Naive thymus-derived CD4-positive, alpha-beta T cell (primary cell): ENCODE measurements at regions of chr4 and their contacts with region 1.

Region 1: DNA sequence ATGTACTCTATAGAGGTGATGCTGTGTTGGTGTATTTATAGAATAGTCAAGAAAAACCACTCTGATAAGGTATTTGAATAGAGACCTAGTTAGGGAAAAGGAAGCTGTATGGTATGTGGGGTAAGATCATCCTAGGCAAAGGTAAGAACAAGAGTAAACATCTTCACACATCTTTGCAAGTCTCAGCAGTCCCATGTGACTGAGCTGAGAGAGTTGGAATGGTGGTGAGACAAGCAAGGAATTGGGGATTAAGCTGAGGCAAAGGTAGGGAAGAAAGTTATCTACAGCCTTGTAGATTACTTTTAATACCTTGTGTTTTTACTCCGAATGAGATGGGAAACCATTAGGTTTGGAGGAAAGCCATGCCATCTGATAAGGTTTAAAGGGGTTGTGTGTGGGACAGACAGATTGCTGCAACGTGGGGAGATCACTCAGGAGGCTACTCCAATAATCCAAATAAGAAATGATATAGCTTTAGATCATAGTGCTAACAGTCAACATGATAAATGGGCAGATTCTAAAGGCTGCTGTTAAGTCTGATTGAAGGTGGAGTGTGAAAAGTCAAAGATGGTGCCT is 31.7 kb upstream of the MANBA start:
- DNase-seq: no peak
- ATAC-seq: peak; percentile 41
- H3K4me3 ChIP-seq: no peak overlapping the region
- H3K4me3 Mint-ChIP-seq: no peak overlapping the region
- H3K27ac ChIP-seq: no peak overlapping the region
- H3K27ac Mint-ChIP-seq: peak overlapping the region in 6 of 9 donors; percentile 6 to 48 (median 28)
- H3K4me1 ChIP-seq: no peaks in the 10 kb centered on the region
- H3K4me1 Mint-ChIP-seq: peaks cover 8 to 27% (median 19%) of the 10 kb centered on the region in 7 donors
- H3K27me3 ChIP-seq: no peaks in the 10 kb centered on the region
- H3K27me3 Mint-ChIP-seq: no peaks in the 10 kb centered on the region

Region 2: GRCh38 chr4:102751941-102752340 is 40.5 kb before region 1 on chr4:
- CTCF ChIA-PET with region 1: no interaction called
- POLR2A ChIA-PET with region 1: no interaction called
- intact Hi-C with region 1: no loop called
- DNase-seq: no peak
- ATAC-seq: peak; percentile 72
- H3K4me3 ChIP-seq: no peak overlapping the region
- H3K4me3 Mint-ChIP-seq: no peak overlapping the region
- H3K27ac ChIP-seq: no peak overlapping the region
- H3K27ac Mint-ChIP-seq: peak overlapping the region in 1 of 9 donors; percentile 19
- H3K4me1 ChIP-seq: no peaks in the 10 kb centered on the region
- H3K4me1 Mint-ChIP-seq: peaks cover 2 to 21% (median 9%) of the 10 kb centered on the region in 7 donors
- H3K27me3 ChIP-seq: no peaks in the 10 kb centered on the region
- H3K27me3 Mint-ChIP-seq: no peaks in the 10 kb centered on the region

Region 3: GRCh38 chr4:102780476-102781144 is 11.8 kb before region 1 on chr4:
- CTCF ChIA-PET with region 1: no interaction called
- POLR2A ChIA-PET with region 1: interaction called, 4 read pairs
- intact Hi-C with region 1: loop called in 1 of 2 experiments (anchors 2 kb)
- DNase-seq: no peak
- ATAC-seq: peak; percentile 69
- H3K4me3 ChIP-seq: no peak overlapping the region
- H3K4me3 Mint-ChIP-seq: no peak overlapping the region
- H3K27ac ChIP-seq: no peak overlapping the region
- H3K27ac Mint-ChIP-seq: no peak overlapping the region
- H3K4me1 ChIP-seq: no peaks in the 10 kb centered on the region
- H3K4me1 Mint-ChIP-seq: no peaks in the 10 kb centered on the region
- H3K27me3 ChIP-seq: no peaks in the 10 kb centered on the region
- H3K27me3 Mint-ChIP-seq: peaks cover 0 to 15% (median 4%) of the 10 kb centered on the region in 5 donors

Region 4: GRCh38 chr4:102815981-102816380 is 23.5 kb after region 1 on chr4:
- CTCF ChIA-PET with region 1: interaction called, 3 read pairs
- POLR2A ChIA-PET with region 1: interaction called, 9 read pairs
- intact Hi-C with region 1: loop called in 1 of 2 experiments (anchors 2 kb)
- DNase-seq: no peak
- ATAC-seq: no peak
- H3K4me3 ChIP-seq: no peak overlapping the region
- H3K4me3 Mint-ChIP-seq: peak overlapping the region in 6 of 10 donors; percentile 39 to 79 (median 70)
- H3K27ac ChIP-seq: peak overlapping the region; percentile 9
- H3K27ac Mint-ChIP-seq: peak overlapping the region in 7 of 9 donors; percentile 61 to 84 (median 69)
- H3K4me1 ChIP-seq: peaks cover 77 to 81% of the 10 kb centered on the region in 2 donors
- H3K4me1 Mint-ChIP-seq: peaks cover 77 to 94% (median 91%) of the 10 kb centered on the region in 7 donors
- H3K27me3 ChIP-seq: no peaks in the 10 kb centered on the region
- H3K27me3 Mint-ChIP-seq: no peaks in the 10 kb centered on the region

Region 5: DNA sequence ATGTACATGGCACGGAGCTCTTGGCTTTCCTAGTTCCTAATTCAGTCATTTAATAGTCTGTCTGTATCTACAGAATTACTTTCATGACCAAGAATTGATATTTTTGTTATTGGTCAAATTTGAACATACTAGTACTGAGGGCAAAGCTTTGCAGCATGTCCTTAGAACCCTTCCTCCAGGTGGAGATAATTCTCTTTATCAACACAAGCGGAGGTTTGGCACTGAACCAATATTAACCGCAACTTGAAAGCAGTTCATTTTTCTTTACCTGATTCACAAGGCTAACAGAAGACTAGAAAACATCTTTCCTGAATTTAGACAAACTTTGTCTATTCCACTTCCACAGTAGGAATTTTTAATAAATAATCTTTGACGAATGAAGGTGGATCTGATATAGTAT is 853.5 kb after region 1 on chr4:
- CTCF ChIA-PET with region 1: no interaction called
- POLR2A ChIA-PET with region 1: no interaction called
- intact Hi-C with region 1: no loop called
- DNase-seq: no peak
- ATAC-seq: no peak
- H3K4me3 ChIP-seq: no peak overlapping the region
- H3K4me3 Mint-ChIP-seq: no peak overlapping the region
- H3K27ac ChIP-seq: no peak overlapping the region
- H3K27ac Mint-ChIP-seq: no peak overlapping the region
- H3K4me1 ChIP-seq: no peaks in the 10 kb centered on the region
- H3K4me1 Mint-ChIP-seq: no peaks in the 10 kb centered on the region
- H3K27me3 ChIP-seq: no peaks in the 10 kb centered on the region
- H3K27me3 Mint-ChIP-seq: no peaks in the 10 kb centered on the region